Dendritic cell treated with granulocyte-macrophage colony-stimulating factor and Interleukin-4, amounts not matched to agents 40 ng/mL and 50 ng/mL, for 4 days (primary cell): ENCODE measurements at regions of chr7 and their contacts with region 1.

Region 1: DNA sequence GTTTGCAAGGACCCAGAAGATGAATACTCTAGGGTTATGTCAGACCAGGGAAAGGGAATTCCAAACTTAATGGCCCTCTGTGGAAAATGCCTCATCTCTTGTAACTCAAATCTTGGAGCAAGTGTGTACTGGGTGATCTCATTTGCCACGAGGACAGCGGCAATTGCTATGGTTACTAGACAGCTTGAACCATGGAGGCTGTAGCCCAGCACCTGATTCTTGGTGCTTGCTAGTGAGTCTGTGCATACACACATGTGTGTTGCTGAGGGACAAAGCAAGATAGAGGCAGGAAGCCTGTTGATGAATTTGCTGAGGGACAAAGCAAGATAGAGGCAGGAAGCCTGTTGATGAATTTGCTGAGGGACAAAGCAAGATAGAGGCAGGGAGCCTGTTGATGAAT is 58.6 kb upstream of the FEZF1 start:
- H3K4me3 Mint-ChIP-seq: no peak overlapping the region
- H3K27ac Mint-ChIP-seq: no peak overlapping the region
- H3K4me1 Mint-ChIP-seq: no peaks in the 10 kb centered on the region
- H3K27me3 Mint-ChIP-seq: no peaks in the 10 kb centered on the region

Region 2: GRCh38 chr7:122329145-122329802 is 33.9 kb before region 1 on chr7:
- intact Hi-C with region 1: loop called (anchors 1 kb)
- H3K4me3 Mint-ChIP-seq: no peak overlapping the region
- H3K27ac Mint-ChIP-seq: no peak overlapping the region
- H3K4me1 Mint-ChIP-seq: no peaks in the 10 kb centered on the region
- H3K27me3 Mint-ChIP-seq: peaks cover 2% of the 10 kb centered on the region